Activated CD4-positive, alpha-beta T cell treated with anti-CD3 and anti-CD28 coated beads for 36 hours (primary cell): ENCODE measurements at regions of chr16 and their contacts with region 1.

Region 1: DNA sequence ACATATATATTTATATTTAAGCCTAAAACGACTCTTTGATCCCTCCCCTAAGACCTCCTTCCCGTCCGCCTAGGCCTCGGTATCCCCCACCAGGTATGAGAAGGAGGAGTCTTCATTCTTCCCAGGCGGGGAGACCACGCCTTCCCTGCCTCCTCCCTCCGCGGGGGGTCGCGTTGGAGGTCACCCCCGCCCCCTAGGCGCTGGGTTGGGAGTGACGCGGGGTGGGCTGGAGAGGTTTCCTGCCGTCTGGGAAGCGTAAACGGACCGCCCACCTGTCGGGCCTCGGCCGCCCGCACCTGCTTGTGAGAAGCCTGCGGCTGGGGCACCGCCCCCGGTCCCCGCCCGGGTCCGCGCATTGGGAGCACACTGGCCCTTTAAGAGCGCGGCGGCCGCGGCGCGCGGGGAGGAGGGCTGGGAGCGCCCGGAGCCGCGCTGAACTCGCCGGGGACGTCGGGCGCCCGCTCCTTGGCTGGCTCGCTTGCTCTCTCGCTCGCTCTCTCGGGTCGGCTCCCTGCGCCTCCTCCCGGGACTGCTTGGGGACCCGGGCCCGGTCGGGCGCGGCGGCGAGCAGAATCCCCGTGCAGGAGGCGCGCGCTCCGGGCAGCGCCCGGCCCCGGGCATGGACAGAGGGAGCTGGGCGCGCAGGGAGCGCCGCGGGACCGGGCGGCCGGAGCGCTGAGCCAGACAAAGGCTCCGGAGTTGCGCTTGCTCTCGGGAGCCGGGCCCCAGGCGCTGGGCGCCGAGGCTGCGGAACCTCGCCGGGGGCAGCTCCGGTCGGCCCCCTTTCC is at the start of gene MMP15:
- DNase-seq: peak; percentile 77
- ATAC-seq: peak; percentile 77
- H3K4me3 Mint-ChIP-seq: peak within 1 kb of the TSS; percentile 72
- H3K27ac Mint-ChIP-seq: peak within 1 kb of the TSS; percentile 75
- H3K4me1 Mint-ChIP-seq: peaks cover 10% of the 10 kb centered on the region
- H3K27me3 Mint-ChIP-seq: peaks cover 5% of the 10 kb centered on the region
- total RNA-seq, gene MMP15: 0.19 to 0.43 TPM

Region 2: GRCh38 chr16:57984331-57985203 is 41.0 kb before region 1 on chr16:
- CTCF ChIA-PET with region 1: interaction called, 4 read pairs
- POLR2A ChIA-PET with region 1: no interaction called
- intact Hi-C with region 1: loop called in 1 of 2 experiments (anchors 1 kb)
- DNase-seq: peak; percentile 97
- ATAC-seq: peak; percentile 100
- H3K4me3 Mint-ChIP-seq: peak overlapping the region; percentile 76
- H3K27ac Mint-ChIP-seq: no peak overlapping the region
- H3K4me1 Mint-ChIP-seq: peaks cover 7% of the 10 kb centered on the region
- H3K27me3 Mint-ChIP-seq: no peaks in the 10 kb centered on the region

Region 3: GRCh38 chr16:58121132-58121531 is 95.6 kb after region 1 on chr16:
- CTCF ChIA-PET with region 1: interaction called, 13 read pairs
- POLR2A ChIA-PET with region 1: no interaction called
- intact Hi-C with region 1: loop called in 1 of 2 experiments (anchors 1 kb)
- DNase-seq: no peak
- ATAC-seq: no peak
- H3K4me3 Mint-ChIP-seq: no peak overlapping the region
- H3K27ac Mint-ChIP-seq: no peak overlapping the region
- H3K4me1 Mint-ChIP-seq: peaks cover 52% of the 10 kb centered on the region
- H3K27me3 Mint-ChIP-seq: no peaks in the 10 kb centered on the region

Region 4: DNA sequence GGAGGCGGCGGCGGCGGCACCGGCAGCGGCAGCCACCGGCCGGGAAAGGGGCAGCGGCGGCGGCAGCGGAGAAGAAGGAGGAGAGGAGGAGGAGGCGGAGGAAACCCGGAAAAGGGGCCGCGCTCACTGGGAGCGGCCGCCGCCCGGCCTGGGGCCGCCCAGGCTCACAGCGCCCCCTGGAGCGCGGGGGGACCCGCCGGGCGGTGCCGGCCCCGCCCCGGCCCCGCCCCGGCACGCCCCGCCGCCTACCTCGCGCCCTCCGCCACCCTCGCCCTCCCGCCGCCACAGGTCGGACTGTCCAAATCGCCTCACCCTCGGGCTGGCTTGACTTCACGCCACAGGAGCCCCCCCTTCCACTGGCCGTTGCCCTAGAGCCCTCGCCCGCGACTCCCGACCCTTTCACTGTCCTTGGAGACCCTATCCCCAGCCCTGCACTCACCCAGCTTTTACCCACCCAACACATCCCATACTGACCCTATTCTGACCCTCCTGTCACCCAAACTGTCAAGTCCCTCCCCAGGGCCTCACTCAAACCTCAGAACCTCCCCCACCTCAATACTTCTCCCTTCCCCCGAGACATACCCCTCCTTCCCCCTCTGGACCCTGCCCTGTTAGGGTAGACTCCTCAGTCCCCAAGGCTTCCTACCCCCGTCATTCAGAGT is 172.6 kb after region 1 on chr16 and contains the start of gene CSNK2A2:
- CTCF ChIA-PET with region 1: interaction called, 4 read pairs
- POLR2A ChIA-PET with region 1: no interaction called
- intact Hi-C with region 1: loop called (anchors 2 to 10 kb)
- DNase-seq: peak; percentile 84
- ATAC-seq: peak; percentile 94
- H3K4me3 Mint-ChIP-seq: peak within 1 kb of the TSS; percentile 84
- H3K27ac Mint-ChIP-seq: peak within 1 kb of the TSS; percentile 74
- H3K4me1 Mint-ChIP-seq: peaks cover 34% of the 10 kb centered on the region
- H3K27me3 Mint-ChIP-seq: peaks cover 6% of the 10 kb centered on the region
- total RNA-seq, gene CSNK2A2: 85.9 to 92.2 TPM

Region 5: DNA sequence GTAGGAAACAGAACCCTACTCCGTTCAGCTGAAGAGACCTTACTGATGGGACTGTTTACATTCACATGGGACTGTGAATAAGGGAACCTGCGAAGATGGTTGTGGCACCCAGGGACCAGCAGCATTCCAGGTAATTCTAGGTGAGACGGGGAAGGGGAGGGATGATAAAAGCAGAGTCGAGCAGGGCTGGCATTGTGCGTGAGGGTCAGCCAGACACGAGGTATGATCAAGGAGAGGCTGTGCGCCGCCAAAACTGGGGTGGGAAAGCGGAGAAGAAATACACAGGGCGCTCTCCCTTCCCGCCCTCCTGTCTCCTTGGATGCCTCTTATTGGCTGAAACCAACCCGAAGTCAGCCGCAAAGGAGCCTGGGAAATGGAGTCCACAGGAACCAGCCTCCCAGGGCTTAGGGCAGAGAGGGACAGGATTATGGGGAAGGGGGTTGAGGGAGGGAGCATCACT is 210.7 kb after region 1 on chr16:
- CTCF ChIA-PET with region 1: no interaction called
- POLR2A ChIA-PET with region 1: no interaction called
- intact Hi-C with region 1: loop called in 1 of 2 experiments (anchors 5 kb)
- DNase-seq: peak; percentile 82
- ATAC-seq: peak; percentile 99
- H3K4me3 Mint-ChIP-seq: peak overlapping the region; percentile 69
- H3K27ac Mint-ChIP-seq: no peak overlapping the region
- H3K4me1 Mint-ChIP-seq: peaks cover 8% of the 10 kb centered on the region
- H3K27me3 Mint-ChIP-seq: peaks cover 20% of the 10 kb centered on the region

Region 6: DNA sequence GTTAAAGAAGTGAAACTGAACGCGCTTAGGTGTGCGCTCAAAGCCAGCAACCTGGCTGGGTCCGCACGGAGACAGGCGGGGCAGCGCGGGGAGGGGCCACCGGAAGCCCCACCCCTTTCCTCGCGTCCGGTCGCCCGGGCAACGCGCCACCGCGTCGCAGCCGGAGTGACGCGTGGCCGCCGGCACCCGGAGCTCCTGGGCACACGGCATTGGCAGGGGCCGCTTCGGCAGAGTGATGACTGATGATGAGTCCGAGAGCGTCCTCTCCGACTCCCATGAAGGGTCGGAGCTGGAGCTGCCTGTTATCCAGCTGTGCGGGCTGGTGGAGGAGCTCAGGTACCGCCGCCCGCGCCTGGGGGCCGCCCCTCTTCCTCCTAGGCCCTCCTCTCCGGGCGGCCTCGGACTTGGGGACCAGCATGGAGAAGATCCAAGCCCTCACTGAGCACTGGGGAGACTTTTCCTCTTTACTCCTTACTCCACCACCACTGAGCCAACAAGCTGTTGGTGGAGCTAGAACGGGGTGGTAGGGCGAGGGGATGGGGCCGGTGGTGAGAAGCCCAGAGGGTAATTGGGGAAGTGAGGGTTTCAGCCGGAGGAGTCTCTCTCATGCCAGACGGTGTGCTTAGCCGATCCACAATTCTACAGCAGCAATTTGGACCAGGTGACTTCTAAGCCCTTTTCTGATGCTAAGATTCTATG is 224.4 kb after region 1 on chr16:
- CTCF ChIA-PET with region 1: no interaction called
- POLR2A ChIA-PET with region 1: no interaction called
- intact Hi-C with region 1: loop called in 1 of 2 experiments (anchors 5 kb)
- DNase-seq: peak; percentile 92
- ATAC-seq: peak; percentile 98
- H3K4me3 Mint-ChIP-seq: peak overlapping the region; percentile 81
- H3K27ac Mint-ChIP-seq: peak overlapping the region; percentile 85
- H3K4me1 Mint-ChIP-seq: peaks cover 8% of the 10 kb centered on the region
- H3K27me3 Mint-ChIP-seq: no peaks in the 10 kb centered on the region

Region 7: GRCh38 chr16:58306327-58306726 is 280.8 kb after region 1 on chr16:
- CTCF ChIA-PET with region 1: interaction called, 4 read pairs
- POLR2A ChIA-PET with region 1: no interaction called
- intact Hi-C with region 1: loop called (anchors 1 to 2 kb)
- DNase-seq: peak; percentile 81
- ATAC-seq: no peak
- H3K4me3 Mint-ChIP-seq: no peak overlapping the region
- H3K27ac Mint-ChIP-seq: no peak overlapping the region
- H3K4me1 Mint-ChIP-seq: no peaks in the 10 kb centered on the region
- H3K27me3 Mint-ChIP-seq: peaks cover 7% of the 10 kb centered on the region